ENCODE measurements at regions of chr3 and their contacts with region 1.

Region 1: GRCh38 chr3:196639483-196640296 is at the start of gene NRROS:
- DNase-seq: peak; percentile 85
- ATAC-seq: peak; percentile 87
- H3K4me3 Mint-ChIP-seq: peak within 1 kb of the TSS; percentile 89
- H3K27ac Mint-ChIP-seq: peak within 1 kb of the TSS; percentile 84
- H3K4me1 Mint-ChIP-seq: peaks cover 66% of the 10 kb centered on the region
- H3K27me3 Mint-ChIP-seq: no peaks in the 10 kb centered on the region
- total RNA-seq, gene NRROS: 37.5 to 47.8 TPM

Region 2: DNA sequence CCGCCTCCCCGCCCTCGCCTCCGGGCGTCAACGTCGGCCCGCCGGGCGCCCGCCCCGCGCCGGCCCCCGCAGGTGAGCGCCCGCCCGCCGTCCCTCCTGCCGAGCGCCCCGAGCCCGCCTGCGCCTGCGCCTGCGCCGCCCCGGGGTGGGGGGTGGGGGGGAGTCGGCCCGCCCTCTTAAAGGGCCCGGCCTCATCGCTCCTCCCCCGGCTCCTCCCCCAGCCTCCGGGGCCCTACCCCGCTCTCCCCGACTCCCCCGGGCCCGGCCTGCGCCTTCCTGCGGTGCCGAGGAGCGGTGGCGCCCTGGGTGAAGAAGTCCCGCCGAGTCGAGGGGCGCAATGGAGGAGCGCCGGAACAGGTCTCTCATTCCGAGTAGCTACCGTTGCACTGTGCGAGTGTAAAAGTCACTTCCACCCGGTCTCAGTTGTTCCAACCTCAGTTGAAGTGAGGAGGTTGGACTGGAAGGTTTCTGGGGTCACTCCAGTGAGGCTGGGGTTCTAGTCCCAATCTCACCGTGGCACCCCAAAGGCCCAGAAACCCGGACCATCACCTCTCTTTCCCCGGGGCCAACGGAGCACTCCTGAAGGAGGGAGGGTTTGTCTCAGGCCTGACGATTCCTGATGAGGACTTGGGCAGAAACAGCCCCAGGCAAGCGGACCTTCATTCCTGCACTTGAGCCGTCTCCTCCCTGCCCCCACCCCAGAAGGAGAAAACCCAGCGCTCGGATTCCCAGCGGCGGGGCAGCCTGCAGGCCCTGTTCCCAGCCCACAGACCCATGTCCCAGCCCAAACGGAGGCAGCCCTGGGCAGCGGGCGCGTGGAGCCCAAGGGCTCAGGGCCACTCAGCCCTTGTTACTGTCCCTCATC is 729.8 kb before region 1 on chr3:
- CTCF ChIA-PET with region 1: no interaction called
- DNase-seq: peak; percentile 91
- ATAC-seq: peak; percentile 69
- H3K4me3 Mint-ChIP-seq: peak overlapping the region; percentile 64
- H3K27ac Mint-ChIP-seq: peak overlapping the region; percentile 74
- H3K4me1 Mint-ChIP-seq: peaks cover 31% of the 10 kb centered on the region
- H3K27me3 Mint-ChIP-seq: no peaks in the 10 kb centered on the region

Region 3: DNA sequence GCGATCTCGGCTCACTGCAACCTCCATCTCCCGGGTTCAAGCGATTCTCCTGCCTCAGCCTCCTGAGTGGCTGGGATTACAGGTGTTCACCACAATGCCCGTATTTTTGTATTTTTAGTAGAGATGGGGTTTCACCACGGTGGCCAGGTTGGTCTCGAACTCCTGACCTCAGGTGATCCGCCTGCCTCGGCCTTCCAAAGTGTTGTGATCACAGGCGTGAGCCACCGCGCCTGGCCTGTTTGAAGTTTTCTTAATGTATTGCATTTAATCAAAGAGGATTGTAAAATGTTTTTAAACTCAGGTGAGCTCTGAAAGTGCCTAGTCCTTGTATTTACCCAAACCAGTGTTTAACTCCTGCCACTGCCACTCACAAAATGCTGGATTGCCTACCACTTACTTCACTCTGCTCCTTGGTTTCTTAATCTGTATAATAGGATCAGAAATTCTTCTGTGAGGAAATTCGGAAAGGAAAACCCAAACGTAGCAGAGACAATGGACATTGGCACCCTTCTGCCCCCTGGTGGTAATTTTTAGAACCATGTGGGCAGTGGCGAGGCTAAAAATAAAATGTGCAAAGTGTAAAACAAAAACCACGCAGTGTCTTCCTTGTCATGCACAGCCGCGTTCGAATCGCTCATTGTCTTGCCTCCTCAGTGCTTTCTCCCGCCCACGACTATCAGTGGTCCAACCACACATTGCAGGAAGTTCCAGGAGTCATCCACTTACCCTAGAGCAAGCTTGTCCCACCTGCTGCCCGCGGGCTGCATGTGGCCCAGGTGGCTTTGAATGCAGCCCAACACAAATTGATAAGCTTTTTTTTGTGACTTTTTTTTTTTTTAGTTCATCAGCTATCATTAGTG is 45.1 kb after region 1 on chr3:
- CTCF ChIA-PET with region 1: interaction called, 11 read pairs
- DNase-seq: peak; percentile 83
- ATAC-seq: peak; percentile 87
- H3K4me3 Mint-ChIP-seq: peak overlapping the region; percentile 46
- H3K27ac Mint-ChIP-seq: peak overlapping the region; percentile 50
- H3K4me1 Mint-ChIP-seq: peaks cover 21% of the 10 kb centered on the region
- H3K27me3 Mint-ChIP-seq: no peaks in the 10 kb centered on the region

Measured in activated CD8-positive, alpha-beta memory T cell treated with anti-CD3 and anti-CD28 coated beads, Interleukin-2, amount 10 ng/mL, durations not matched to agents 7 days and 5 days (primary cell).